ENCODE measurements at regions of chr11 and their contacts with region 1.

Region 1: GRCh38 chr11:9757809-9758636 is 94.1 kb downstream of the SWAP70 start:
- DNase-seq: peak; percentile 89
- H3K4me3 ChIP-seq: peak overlapping the region; percentile 63
- H3K27ac ChIP-seq: peak overlapping the region; percentile 98
- H3K4me1 ChIP-seq: peaks cover 56% of the 10 kb centered on the region
- H3K27me3 ChIP-seq: no peaks in the 10 kb centered on the region

Region 2: GRCh38 chr11:9972989-9973388 is 215.0 kb after region 1 on chr11:
- in situ Hi-C with region 1: loop called (anchors 10 kb)
- DNase-seq: peak; percentile 77
- H3K4me3 ChIP-seq: no peak overlapping the region
- H3K27ac ChIP-seq: 0 out of 2 replicates have a peak overlapping the region, but pooled peaks have one; percentile 5
- H3K4me1 ChIP-seq: peaks cover 30% of the 10 kb centered on the region
- H3K27me3 ChIP-seq: no peaks in the 10 kb centered on the region

Region 3: DNA sequence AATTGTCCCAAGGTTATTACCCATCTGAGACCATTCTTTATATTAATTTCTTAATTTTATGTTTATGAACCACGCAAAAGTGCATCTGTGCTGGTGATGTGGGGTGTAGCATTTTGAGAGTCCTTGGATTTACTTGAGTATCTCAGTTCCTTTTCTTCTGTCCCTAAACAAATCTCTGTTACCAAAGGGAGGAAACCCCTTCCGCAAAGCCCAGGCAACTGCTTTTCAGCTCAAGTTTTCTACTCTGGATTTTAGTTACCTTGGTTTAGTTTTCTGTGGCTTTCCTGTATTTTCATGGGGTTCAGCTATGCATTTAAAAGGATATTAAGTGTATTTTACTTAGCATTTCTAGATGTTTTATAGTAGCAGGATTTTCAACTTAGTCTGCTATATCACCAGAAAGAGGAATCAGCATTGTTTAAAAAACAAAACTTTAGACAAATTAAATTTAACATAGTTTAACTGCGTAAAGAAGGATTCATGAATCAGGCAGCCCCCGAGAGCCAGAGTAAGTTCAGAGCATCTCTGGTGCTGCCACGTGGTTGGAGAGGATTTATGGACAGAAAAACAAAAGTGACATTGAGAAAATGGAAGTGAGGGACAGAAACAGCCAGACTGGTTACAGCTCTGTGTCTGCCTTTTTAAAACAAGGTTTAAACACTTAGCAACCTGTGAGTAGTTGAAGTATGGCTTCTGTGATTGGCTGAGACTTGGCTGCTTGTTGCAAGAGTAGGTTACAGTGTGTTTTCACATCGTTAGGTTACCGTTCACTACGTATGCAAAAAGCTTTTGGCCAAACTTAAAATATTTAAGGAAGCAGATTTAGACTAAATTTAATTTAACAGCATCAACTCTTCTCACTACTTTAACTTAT is 556.4 kb after region 1 on chr11:
- in situ Hi-C with region 1: loop called (anchors 10 kb)
- DNase-seq: peak; percentile 53
- H3K4me3 ChIP-seq: no peak overlapping the region
- H3K27ac ChIP-seq: no peak overlapping the region
- H3K4me1 ChIP-seq: peaks cover 11% of the 10 kb centered on the region; the same call in 1 of the 2 replicates
- H3K27me3 ChIP-seq: no peaks in the 10 kb centered on the region